HEK293T (cell line): ENCODE measurements at regions of chr11 and their contacts with region 1.

Region 1: DNA sequence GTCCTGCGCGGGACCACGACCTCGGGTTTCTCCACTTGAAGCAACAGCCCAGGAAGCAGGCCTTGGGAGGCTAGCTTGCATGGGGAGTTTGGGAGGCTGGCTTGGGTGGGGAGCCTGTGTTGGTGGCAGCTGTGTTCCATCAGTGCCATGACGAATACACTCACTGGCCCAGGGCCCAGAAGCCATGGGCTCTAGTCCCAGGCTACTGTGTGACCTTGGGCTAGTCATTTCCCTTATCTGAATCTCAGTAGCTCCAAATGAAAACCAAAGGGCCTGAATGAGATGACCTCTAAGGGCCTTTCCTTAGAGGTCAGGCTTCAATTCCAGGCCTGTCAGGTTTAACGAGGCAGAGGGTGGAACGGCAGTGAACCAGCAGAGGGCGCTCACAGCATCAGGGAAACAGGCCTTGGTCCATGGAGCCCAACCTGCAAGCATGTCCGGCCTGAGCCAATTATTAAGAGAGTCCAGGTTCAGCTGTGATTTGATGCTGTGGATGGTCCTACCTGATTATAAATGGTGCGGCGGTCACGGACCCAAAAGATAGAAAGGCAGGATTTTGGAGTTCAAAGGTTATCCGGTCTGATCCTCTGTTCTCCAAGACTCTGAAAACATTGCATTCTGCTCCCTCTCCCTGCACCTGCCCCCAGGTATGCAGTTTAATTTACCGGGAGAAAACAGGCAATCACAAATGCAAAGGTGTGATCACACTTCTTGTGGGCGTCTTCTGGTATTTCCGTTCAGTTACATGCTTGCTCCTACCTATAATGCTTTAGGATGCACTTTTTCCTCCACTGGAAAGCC is 15.9 kb downstream of the PTPN5 start:
- DNase-seq: peak; percentile 78

Region 2: DNA sequence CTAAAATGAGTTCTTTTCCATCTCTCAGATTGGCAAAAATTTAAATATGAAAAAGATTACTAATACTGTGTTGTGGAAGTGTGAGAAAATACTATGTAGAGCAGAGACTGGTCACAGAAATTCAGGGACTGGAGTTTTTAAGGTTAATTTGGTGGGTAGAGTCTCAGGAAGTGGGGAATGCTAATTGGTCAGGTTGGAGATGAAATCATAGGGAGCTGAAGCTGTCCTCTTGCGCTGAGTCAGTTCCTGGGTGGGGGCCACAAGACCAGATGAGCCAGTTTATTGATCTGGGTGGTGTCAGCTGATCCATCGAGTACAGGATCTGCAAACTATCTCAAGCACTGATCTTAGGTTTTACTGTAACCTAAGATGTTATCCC is 106.5 kb before region 1 on chr11:
- CTCF ChIA-PET with region 1: no interaction called
- POLR2A ChIA-PET with region 1: no interaction called
- DNase-seq: no peak

Region 3: DNA sequence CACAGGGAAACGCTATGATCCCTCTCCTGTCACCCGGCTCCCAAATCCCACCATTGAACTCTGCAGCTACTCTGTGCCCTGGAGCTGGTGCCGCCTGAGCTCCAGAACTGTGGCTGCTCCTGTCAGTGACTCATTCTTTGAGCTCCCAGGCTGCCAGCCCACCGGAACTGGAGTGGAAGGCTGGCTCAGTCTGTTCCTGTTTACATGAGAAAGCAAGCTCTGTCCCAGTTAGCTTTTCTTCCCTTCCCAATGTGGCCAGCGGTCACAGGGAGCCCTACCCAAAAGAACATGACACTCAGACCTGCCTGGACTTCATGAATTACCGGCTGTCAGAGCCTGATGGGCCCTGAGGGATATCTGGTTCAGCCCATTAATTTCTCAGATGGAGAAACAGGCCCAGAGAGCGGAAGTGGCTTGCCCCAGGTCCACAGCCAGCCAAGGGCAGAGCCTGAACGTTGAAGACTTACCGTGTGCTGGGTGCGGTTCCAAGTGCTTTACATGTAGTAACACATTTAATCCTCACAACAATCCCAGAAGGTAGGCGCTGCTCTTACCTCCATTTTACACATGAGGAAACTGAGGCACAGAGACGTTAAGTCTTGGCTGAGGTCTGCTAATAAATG is 25.9 kb before region 1 on chr11:
- CTCF ChIA-PET with region 1: no interaction called
- POLR2A ChIA-PET with region 1: no interaction called
- DNase-seq: no peak

Region 4: GRCh38 chr11:18765554-18765953 is 10.1 kb before region 1 on chr11:
- CTCF ChIA-PET with region 1: interaction called, 14 read pairs
- POLR2A ChIA-PET with region 1: no interaction called
- DNase-seq: no peak

Region 5: DNA sequence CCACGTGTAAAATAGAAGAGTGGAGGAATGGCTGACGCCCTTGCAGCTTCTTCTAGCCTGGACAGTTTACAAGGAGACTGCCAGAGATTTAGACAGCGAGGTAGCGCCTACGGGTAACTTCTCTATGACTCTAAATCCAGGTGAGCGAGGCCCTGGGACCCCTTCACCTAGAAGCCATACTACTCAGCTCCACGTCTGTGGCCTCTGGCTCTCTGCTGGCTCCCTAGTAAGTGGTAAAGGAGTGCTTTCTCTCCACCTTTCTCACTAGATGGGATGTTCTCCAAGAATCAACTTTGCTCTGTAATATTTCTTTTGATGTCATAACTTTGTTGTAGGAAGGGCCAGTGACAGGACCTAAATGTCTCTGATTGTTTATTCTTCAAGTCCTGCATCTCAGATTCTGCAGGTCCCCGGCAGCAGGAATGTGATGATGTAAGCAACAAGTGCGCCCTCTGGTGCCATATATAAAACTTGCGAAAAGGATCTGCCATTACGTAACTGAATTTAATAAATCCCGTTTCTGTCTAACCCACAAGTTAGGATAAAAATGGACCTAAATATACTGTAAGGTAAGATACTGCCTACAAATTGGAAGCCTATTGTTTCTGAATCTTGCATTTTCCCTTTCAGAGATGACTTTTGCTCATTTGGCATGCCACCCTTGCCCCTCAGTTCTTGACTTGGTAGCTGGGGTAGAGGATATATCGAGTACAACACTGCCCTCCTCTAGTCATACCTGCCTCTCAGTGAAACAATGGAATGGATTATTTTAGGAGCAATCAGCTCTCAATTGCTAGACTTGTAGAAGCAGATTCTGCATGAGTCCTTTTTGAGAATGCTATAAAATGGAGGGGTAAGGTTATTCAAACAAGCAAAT is 26.9 kb after region 1 on chr11:
- CTCF ChIA-PET with region 1: interaction called, 20 read pairs
- POLR2A ChIA-PET with region 1: no interaction called
- DNase-seq: peak; percentile 63